AG04450 (cell line): ENCODE measurements at regions of chr7 and their contacts with region 1.

Region 1: DNA sequence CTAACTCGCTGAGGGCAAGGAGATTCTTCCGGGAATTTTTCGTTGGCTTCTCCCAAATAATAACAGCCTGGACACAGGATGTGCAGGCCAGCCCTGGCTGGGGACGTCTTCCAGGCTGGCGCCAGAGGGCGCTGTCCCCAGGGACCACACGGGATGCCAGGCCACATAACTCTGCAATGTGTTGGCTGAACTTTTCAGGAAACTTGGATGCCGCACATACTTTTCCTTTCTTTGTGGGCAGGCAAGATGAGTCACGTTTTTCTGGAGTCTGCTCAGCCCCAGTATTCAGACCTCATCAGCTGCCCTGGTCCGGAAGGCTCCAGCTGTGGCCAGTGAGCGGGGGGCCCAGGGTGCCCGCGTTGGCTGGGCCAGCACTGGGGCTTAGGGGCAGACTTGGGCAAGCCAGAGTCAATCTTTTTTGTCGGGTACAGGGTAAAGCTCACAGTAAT is 122.7 kb downstream of the PRKAG2 start:
- DNase-seq: peak; percentile 98
- H3K4me3 ChIP-seq: no peak overlapping the region
- H3K27ac ChIP-seq: peak overlapping the region; percentile 88
- H3K27me3 ChIP-seq: no peaks in the 10 kb centered on the region
- CTCF ChIP-seq: peak; percentile 99

Region 2: GRCh38 chr7:151719461-151720241 is 34.5 kb before region 1 on chr7:
- CTCF ChIA-PET with region 1: no interaction called
- POLR2A ChIA-PET with region 1: no interaction called
- DNase-seq: no peak
- H3K4me3 ChIP-seq: no peak overlapping the region
- H3K27ac ChIP-seq: no peak overlapping the region
- H3K27me3 ChIP-seq: no peaks in the 10 kb centered on the region
- CTCF ChIP-seq: no peak

Region 3: GRCh38 chr7:151736403-151736909 is 17.7 kb before region 1 on chr7:
- CTCF ChIA-PET with region 1: interaction called, 12 read pairs
- POLR2A ChIA-PET with region 1: interaction called, 4 read pairs
- DNase-seq: peak; percentile 92
- H3K4me3 ChIP-seq: peak overlapping the region; percentile 61
- H3K27ac ChIP-seq: peak overlapping the region; percentile 91
- H3K27me3 ChIP-seq: no peaks in the 10 kb centered on the region
- CTCF ChIP-seq: peak; percentile 56